ENCODE measurements at regions of chr12 and their contacts with region 1.

Region 1: DNA sequence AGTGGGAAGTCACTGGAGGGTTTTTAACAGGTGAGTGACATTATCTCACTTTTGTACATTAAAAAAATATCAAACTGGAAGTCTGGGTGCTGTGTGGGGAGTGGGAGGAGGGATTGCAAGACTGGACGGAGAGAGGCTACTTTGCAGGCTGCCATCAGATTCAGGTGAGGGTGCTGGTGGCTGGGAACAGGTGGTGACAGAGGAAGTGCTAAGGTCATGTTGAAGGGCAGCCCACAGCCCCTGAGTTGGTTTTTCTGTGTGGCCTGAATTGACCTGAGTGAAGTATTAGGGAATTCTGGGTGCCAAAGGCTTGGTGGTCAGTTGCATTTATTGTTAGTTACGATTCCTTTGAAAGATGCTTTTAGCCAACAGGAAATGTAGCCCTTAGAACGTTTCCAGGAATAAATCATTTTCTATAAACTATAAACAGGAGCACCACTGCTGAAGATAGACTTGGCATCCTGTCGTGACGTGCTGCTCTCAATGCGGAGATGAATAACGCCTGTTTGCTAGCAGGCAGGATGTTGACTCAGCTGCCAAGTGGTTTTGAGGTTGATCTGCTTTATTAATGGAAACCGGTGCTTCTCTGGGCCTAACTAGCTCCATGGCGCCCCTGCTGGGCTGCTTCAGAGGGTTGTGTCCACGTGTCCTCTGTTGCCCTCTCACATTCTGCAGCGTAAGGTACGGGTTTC is 707.5 kb upstream of the TMEM132C start:
- DNase-seq: peak; percentile 92
- H3K4me3 ChIP-seq: no peak overlapping the region
- CTCF ChIP-seq: peak; percentile 80

Region 2: DNA sequence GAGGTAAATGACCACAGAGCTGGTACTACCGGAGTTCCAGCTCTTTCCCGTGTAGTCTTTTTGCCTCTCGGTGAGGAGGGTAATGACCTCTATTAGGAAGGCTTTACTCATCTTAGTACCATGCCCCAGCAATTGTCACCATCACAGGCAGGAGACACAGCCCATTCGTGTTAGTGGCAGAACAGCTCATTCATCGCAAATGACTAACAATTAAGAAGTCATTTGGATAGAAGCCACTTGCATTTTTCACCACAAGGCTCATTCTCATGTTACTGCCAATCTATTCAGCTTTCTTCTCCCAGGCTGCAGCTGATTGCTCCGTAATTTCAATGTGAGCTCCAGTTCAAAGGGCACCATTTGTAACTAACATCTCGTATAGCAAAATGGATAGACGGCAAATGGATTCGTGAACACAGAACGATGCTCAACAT is 11.4 kb before region 1 on chr12:
- CTCF ChIA-PET with region 1: interaction called, 30 read pairs
- POLR2A ChIA-PET with region 1: interaction called, 3 read pairs
- DNase-seq: peak; percentile 44
- H3K4me3 ChIP-seq: no peak overlapping the region
- CTCF ChIP-seq: no peak

Region 3: GRCh38 chr12:127582074-127582473 is 22.6 kb after region 1 on chr12:
- CTCF ChIA-PET with region 1: interaction called, 12 read pairs
- POLR2A ChIA-PET with region 1: interaction called, 3 read pairs
- DNase-seq: no peak
- H3K4me3 ChIP-seq: no peak overlapping the region
- CTCF ChIP-seq: no peak